Heart left ventricle (tissue), 16 donors: ENCODE measurements at regions of chr13 and their contacts with region 1.

Region 1: GRCh38 chr13:22765547-22765946 is 415.2 kb upstream of the SGCG start:
- DNase-seq: no peak
- ATAC-seq: no peak
- H3K4me3 ChIP-seq: no peak overlapping the region
- H3K27ac ChIP-seq: no peak overlapping the region
- H3K4me1 ChIP-seq: no peaks in the 10 kb centered on the region
- H3K27me3 ChIP-seq: no peaks in the 10 kb centered on the region
- CTCF ChIP-seq: no peak
- POLR2A ChIP-seq: no peak

Region 2: GRCh38 chr13:21638319-21639282 is 1126.9 kb before region 1 on chr13:
- intact Hi-C with region 1: loop called in 2 of 10 experiments (anchors 5 to 10 kb)
- DNase-seq: no peak
- ATAC-seq: no peak
- H3K4me3 ChIP-seq: no peak overlapping the region
- H3K27ac ChIP-seq: no peak overlapping the region
- H3K4me1 ChIP-seq: no peaks in the 10 kb centered on the region
- H3K27me3 ChIP-seq: peaks cover 0 to 14% (median 0%) of the 10 kb centered on the region in 9 donors
- CTCF ChIP-seq: peak; percentile 72 to 88 (median 78)
- POLR2A ChIP-seq: no peak